Ascending aorta (tissue), 2 donors: ENCODE measurements at regions of chr15 and their contacts with region 1.

Region 1: GRCh38 chr15:82540055-82540983 is at the start of gene RPS17:
- DNase-seq: peak; percentile 83 to 99
- H3K4me3 ChIP-seq: peak within 1 kb of the TSS; percentile 64 to 76
- H3K27ac ChIP-seq: peak within 1 kb of the TSS; percentile 94 to 96
- H3K4me1 ChIP-seq: peaks cover 0 to 16% of the 10 kb centered on the region in 2 donors
- H3K27me3 ChIP-seq: no peaks in the 10 kb centered on the region
- CTCF ChIP-seq: peak; percentile 97 to 99 (median 98)
- total RNA-seq, gene RPS17: 1,125 TPM

Region 2: GRCh38 chr15:82647045-82647834 is 106.9 kb after region 1 on chr15 and contains the start of gene CPEB1:
- intact Hi-C with region 1: loop called (anchors 2 kb)
- DNase-seq: peak in 1 of 2 donors; percentile 72
- H3K4me3 ChIP-seq: peak within 1 kb of the TSS; percentile 66 to 78
- H3K27ac ChIP-seq: peak within 1 kb of the TSS; percentile 33 to 54
- H3K4me1 ChIP-seq: peaks cover 8 to 12% of the 10 kb centered on the region in 2 donors
- H3K27me3 ChIP-seq: no peaks in the 10 kb centered on the region
- CTCF ChIP-seq: peak in 2 of 3 experiments; percentile 4 to 9
- total RNA-seq, gene CPEB1: 2.4 TPM

Region 3: GRCh38 chr15:82809404-82810060 is 269.2 kb after region 1 on chr15 and contains the start of gene WHAMM:
- intact Hi-C with region 1: loop called (anchors 1 kb)
- DNase-seq: peak; percentile 99
- H3K4me3 ChIP-seq: peak within 1 kb of the TSS; percentile 90 to 91
- H3K27ac ChIP-seq: peak within 1 kb of the TSS; percentile 98 to 100
- H3K4me1 ChIP-seq: peaks cover 7 to 16% of the 10 kb centered on the region in 2 donors
- H3K27me3 ChIP-seq: no peaks in the 10 kb centered on the region
- CTCF ChIP-seq: peak in 1 of 3 experiments; percentile 8
- total RNA-seq, gene WHAMM: 18.8 TPM

Region 4: GRCh38 chr15:82999905-83000671 is 459.8 kb after region 1 on chr15:
- intact Hi-C with region 1: loop called (anchors 5 kb)
- DNase-seq: no peak
- H3K4me3 ChIP-seq: peak overlapping the region; percentile 28 to 44
- H3K27ac ChIP-seq: peak overlapping the region in 1 of 2 donors; percentile 24
- H3K4me1 ChIP-seq: peaks cover 0 to 3% of the 10 kb centered on the region in 2 donors
- H3K27me3 ChIP-seq: no peaks in the 10 kb centered on the region
- CTCF ChIP-seq: peak in 2 of 3 experiments; percentile 39 to 49

Region 5: DNA sequence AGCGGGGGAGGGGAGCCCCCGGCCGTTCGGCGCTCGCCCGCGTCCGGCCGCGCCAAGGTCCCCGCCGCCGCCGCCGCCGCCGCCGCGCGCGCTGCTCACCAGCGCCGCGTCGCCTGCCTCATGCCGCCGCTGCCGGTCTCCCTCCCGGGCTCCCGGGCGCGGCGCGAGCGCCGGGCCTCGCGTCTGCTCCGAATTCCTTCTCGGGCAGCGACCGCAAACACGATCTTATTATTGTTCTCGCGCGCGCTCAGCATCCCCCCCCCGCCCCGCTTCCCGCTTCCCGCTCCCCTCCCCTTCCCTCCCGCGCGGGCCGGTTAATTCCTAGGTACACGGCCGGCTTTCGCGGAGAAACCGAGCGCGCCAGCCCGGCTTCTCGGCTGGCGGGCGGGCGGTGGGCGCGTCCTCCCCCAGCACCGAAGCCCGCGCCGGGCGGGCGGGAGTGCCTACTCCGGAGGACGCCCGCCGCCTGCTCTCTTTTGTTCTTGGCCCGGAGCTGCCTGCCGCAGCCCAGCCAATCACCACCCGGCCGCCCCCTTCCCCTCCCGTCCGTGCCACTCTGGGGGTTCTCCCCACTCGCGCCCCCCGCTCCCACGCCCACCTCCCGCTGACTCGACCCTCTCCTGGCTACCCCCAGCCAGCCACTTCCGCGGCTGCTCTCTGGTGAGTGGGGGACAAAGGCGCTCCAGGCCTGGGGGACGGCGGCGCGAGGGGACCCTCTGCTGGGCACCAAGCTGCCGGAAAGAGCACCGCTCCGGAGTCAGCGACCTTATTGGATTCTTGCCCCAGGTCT is 667.5 kb after region 1 on chr15 and contains the start of gene HDGFL3:
- intact Hi-C with region 1: loop called (anchors 10 kb)
- DNase-seq: peak in 1 of 2 donors; percentile 73
- H3K4me3 ChIP-seq: peak within 1 kb of the TSS; percentile 79 to 100
- H3K27ac ChIP-seq: peak within 1 kb of the TSS; percentile 89 to 100
- H3K4me1 ChIP-seq: peaks cover 4% of the 10 kb centered on the region in 2 donors
- H3K27me3 ChIP-seq: no peaks in the 10 kb centered on the region
- CTCF ChIP-seq: no peak
- total RNA-seq, gene HDGFL3: 20.8 TPM